HCT116 (cell line): ENCODE measurements at regions of chr3 and their contacts with region 1.

Region 1: DNA sequence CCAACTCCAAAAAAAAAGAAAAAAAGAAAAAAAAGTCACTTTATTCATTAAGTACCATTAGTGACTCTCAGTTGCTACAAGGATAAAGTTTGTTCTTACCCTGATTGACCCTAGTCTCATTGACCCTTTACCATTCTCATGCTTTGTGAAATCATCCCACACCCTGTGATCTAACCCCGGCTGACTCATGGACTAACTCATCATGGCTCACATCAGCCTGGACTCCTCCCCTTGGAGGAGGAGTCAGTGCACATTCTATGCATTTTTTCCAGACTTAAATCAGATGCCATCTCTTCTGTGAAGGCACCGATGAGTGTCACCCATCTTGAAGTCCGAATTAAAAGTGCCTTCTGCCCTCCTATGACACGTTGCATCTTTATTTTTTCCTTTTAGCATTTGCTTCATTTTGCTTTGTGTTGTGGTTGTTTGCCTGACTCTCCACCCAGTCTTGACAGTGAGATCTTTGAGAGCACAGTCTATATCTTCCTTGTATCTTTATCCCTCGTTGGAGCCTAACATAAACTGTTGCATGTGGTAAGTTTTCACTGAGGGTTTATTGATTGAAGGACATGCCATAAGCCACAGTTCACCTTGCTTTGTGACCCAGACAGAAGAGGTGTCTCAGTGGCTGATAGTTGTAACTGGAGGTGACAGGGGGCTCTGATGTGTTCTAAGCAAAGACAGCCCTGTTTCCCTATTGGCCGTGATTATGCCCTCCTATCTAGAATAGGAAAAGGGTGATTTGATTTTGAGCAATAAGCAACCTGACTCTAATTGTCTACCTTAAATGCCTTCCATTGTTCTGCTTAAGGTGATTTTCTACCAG is 72.1 kb downstream of the IL1RAP start:
- DNase-seq: peak; percentile 81
- ATAC-seq: peak; percentile 93
- H3K4me3 ChIP-seq: peak overlapping the region in 1 of 2 experiments; percentile 10; a peak in 1 of 4 replicates
- H3K27ac ChIP-seq: no peak overlapping the region
- H3K4me1 ChIP-seq: peaks cover 11 to 25% of the 10 kb centered on the region in 2 experiments
- H3K27me3 ChIP-seq: no peaks in the 10 kb centered on the region
- CTCF ChIP-seq: no peak
- POLR2A ChIP-seq: no peak
- RAD21 ChIP-seq: no peak

Region 2: GRCh38 chr3:190566043-190566933 is 19.7 kb before region 1 on chr3:
- CTCF ChIA-PET with region 1: no interaction called
- POLR2A ChIA-PET with region 1: no interaction called
- RAD21 ChIA-PET with region 1: no interaction called
- intact Hi-C with region 1: loop called (anchors 1 kb)
- DNase-seq: peak; percentile 98
- ATAC-seq: peak; percentile 90
- H3K4me3 ChIP-seq: peak overlapping the region in 1 of 2 experiments; percentile 42; a peak in 2 of 4 replicates
- H3K27ac ChIP-seq: peak overlapping the region; percentile 48
- H3K4me1 ChIP-seq: peaks cover 12 to 45% of the 10 kb centered on the region in 2 experiments
- H3K27me3 ChIP-seq: no peaks in the 10 kb centered on the region
- CTCF ChIP-seq: no peak
- POLR2A ChIP-seq: no peak
- RAD21 ChIP-seq: peak; percentile 59